ENCODE measurements at regions of chr19 and their contacts with region 1.

Region 1: GRCh38 chr19:54189735-54190502 is 539 bp upstream of the MBOAT7 start:
- DNase-seq: peak; percentile 98 to 100 (median 100)
- ATAC-seq: peak; percentile 73
- H3K4me3 ChIP-seq: peak overlapping the region; percentile 81
- H3K4me3 Mint-ChIP-seq: peak overlapping the region; percentile 90 to 100 (median 93)
- H3K27ac ChIP-seq: peak overlapping the region; percentile 99
- H3K27ac Mint-ChIP-seq: peak overlapping the region; percentile 97 to 100 (median 99)
- H3K4me1 ChIP-seq: peaks cover 20 to 22% of the 10 kb centered on the region in 2 donors
- H3K4me1 Mint-ChIP-seq: peaks cover 15 to 47% (median 39%) of the 10 kb centered on the region in 7 donors
- H3K27me3 ChIP-seq: no peaks in the 10 kb centered on the region
- H3K27me3 Mint-ChIP-seq: peaks cover 0 to 2% (median 0%) of the 10 kb centered on the region in 5 donors

Region 2: DNA sequence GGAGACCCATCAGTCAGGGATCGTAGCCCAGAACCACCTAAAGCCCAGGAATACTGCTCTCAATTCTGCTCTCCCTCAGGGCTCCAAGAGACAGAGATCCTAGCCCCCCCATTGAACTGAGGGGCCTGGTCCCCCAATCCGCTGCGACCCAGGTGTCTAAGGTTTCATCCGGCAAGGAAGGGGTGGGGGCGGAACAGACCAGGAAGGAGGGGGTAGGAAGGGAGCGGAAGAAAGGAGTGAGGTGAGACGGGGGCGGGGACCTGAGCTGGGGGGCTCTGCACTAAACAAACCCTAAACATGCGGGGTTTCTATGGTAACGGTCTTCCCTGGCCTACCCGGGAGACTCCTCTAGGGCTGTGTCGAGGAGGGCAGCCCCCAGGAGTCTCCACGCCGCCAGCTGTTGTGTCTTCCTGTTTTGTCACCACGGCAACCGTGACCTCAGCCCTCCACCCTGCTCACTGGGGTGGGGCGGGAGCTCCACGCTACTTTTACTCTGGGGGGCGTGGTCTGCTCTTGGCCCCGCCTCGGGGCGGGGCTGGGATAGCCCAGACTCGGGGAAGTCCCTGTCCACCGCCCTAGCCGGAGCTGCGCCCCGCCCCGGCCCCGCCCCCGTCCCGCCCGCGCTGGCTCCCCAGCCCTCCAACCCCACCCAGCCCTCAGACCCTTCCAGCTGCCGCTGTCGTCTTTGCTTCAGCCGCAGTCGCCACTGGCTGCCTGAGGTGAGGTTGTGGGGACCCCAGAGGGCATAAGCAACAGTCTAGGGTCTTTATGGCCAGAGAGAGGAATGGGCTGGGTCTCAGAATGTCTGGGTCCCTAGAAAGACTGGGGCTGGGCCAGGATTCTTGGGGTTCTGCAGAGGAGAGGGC is 322.5 kb before region 1 on chr19 and contains the start of gene MYADM:
- CTCF ChIA-PET with region 1: no interaction called
- POLR2A ChIA-PET with region 1: interaction called, 8 read pairs
- intact Hi-C with region 1: loop called (anchors 1 kb)
- DNase-seq: peak; percentile 99 to 100 (median 100)
- ATAC-seq: peak; percentile 80
- H3K4me3 ChIP-seq: peak within 1 kb of the TSS; percentile 90
- H3K4me3 Mint-ChIP-seq: peak within 1 kb of the TSS; percentile 92 to 100 (median 97)
- H3K27ac ChIP-seq: peak within 1 kb of the TSS; percentile 99
- H3K27ac Mint-ChIP-seq: peak within 1 kb of the TSS; percentile 97 to 100 (median 99)
- H3K4me1 ChIP-seq: peaks cover 17 to 26% of the 10 kb centered on the region in 2 donors
- H3K4me1 Mint-ChIP-seq: peaks cover 15 to 45% (median 34%) of the 10 kb centered on the region in 7 donors
- H3K27me3 ChIP-seq: no peaks in the 10 kb centered on the region
- H3K27me3 Mint-ChIP-seq: peaks cover 0 to 5% (median 0%) of the 10 kb centered on the region in 5 donors
- total RNA-seq, gene MYADM: 51.5 to 524 (median 116) TPM

Region 3: GRCh38 chr19:53977429-53977990 is 212.4 kb before region 1 on chr19:
- CTCF ChIA-PET with region 1: no interaction called
- POLR2A ChIA-PET with region 1: no interaction called
- intact Hi-C with region 1: no loop called
- DNase-seq: peak; percentile 34 to 69 (median 59)
- ATAC-seq: peak; percentile 83
- H3K4me3 ChIP-seq: peak overlapping the region; percentile 42
- H3K4me3 Mint-ChIP-seq: peak overlapping the region; percentile 73 to 90 (median 83)
- H3K27ac ChIP-seq: no peak overlapping the region
- H3K27ac Mint-ChIP-seq: peak overlapping the region in 2 of 9 donors; percentile 21 to 50
- H3K4me1 ChIP-seq: peaks cover 0 to 5% of the 10 kb centered on the region in 2 donors
- H3K4me1 Mint-ChIP-seq: peaks cover 14 to 41% (median 30%) of the 10 kb centered on the region in 7 donors
- H3K27me3 ChIP-seq: peaks cover 6 to 16% of the 10 kb centered on the region in 2 donors
- H3K27me3 Mint-ChIP-seq: peaks cover 48 to 70% (median 61%) of the 10 kb centered on the region in 5 donors

Region 4: GRCh38 chr19:54137086-54137921 is 52.6 kb before region 1 on chr19 and contains the start of gene CNOT3:
- CTCF ChIA-PET with region 1: interaction called, 6 read pairs
- POLR2A ChIA-PET with region 1: interaction called, 48 read pairs
- intact Hi-C with region 1: loop called (anchors 1 kb)
- DNase-seq: peak; percentile 90 to 100 (median 100)
- ATAC-seq: peak; percentile 88
- H3K4me3 ChIP-seq: peak within 1 kb of the TSS; percentile 66
- H3K4me3 Mint-ChIP-seq: peak within 1 kb of the TSS; percentile 87 to 98 (median 90)
- H3K27ac ChIP-seq: peak within 1 kb of the TSS; percentile 97
- H3K27ac Mint-ChIP-seq: peak within 1 kb of the TSS; percentile 85 to 94 (median 92)
- H3K4me1 ChIP-seq: peaks cover 19 to 30% of the 10 kb centered on the region in 2 donors
- H3K4me1 Mint-ChIP-seq: peaks cover 33 to 60% (median 46%) of the 10 kb centered on the region in 7 donors
- H3K27me3 ChIP-seq: no peaks in the 10 kb centered on the region
- H3K27me3 Mint-ChIP-seq: no peaks in the 10 kb centered on the region
- total RNA-seq, gene CNOT3: 38.0 to 84.6 (median 63.9) TPM

Region 5: GRCh38 chr19:54178581-54179243 is 11.2 kb before region 1 on chr19:
- CTCF ChIA-PET with region 1: no interaction called
- POLR2A ChIA-PET with region 1: interaction called, 6 read pairs
- intact Hi-C with region 1: loop called (anchors 1 kb)
- DNase-seq: peak in 5 of 9 donors; percentile 34 to 48 (median 46)
- ATAC-seq: peak; percentile 93
- H3K4me3 ChIP-seq: no peak overlapping the region
- H3K4me3 Mint-ChIP-seq: no peak overlapping the region
- H3K27ac ChIP-seq: no peak overlapping the region
- H3K27ac Mint-ChIP-seq: peak overlapping the region in 1 of 9 donors; percentile 49
- H3K4me1 ChIP-seq: no peaks in the 10 kb centered on the region
- H3K4me1 Mint-ChIP-seq: peaks cover 0 to 7% (median 0%) of the 10 kb centered on the region in 7 donors
- H3K27me3 ChIP-seq: no peaks in the 10 kb centered on the region
- H3K27me3 Mint-ChIP-seq: no peaks in the 10 kb centered on the region

Region 6: DNA sequence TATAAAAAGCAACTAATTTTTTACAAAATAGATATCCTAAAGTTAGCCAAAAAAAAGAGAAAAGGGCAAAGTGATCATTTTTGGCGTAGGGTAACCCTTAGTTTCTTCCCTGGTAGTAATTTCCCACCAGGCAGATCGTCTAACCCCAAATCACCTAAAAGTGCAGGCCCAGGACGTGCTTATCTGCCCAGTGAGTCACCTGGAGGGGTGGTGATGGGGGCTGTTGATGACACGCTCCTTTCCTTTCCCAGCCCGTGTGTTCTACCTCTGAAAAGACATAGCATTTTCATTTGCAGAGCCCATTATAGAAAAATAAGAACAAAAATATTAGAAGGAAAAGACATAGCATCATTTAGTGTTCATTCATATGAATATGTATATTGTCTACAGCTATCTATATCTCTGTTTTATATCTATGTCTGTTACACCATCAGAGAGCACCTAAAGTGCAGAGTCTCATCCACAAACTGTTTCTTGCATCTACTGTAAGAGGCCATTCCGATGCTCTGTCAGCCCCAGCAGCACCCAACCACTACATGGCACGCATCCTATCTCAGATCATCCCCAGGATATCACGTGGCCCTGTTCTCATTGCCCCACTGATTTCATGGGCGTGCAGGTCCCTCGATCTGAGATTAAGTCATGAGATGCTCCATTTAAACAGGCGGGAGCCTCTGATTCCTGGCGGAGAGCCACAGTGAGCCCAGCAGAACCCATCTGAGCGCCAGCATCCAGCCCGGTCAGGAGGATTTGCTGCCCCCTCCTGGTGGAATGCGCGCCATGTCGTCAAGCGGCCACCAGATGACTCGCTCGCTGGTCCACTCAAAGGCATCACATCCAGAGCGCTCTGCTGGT is 41.4 kb after region 1 on chr19:
- CTCF ChIA-PET with region 1: no interaction called
- POLR2A ChIA-PET with region 1: no interaction called
- intact Hi-C with region 1: loop called in 1 of 2 experiments (anchors 1 kb)
- DNase-seq: peak; percentile 48 to 89 (median 70)
- ATAC-seq: peak; percentile 85
- H3K4me3 ChIP-seq: no peak overlapping the region
- H3K4me3 Mint-ChIP-seq: no peak overlapping the region
- H3K27ac ChIP-seq: no peak overlapping the region
- H3K27ac Mint-ChIP-seq: peak overlapping the region in 1 of 9 donors; percentile 26
- H3K4me1 ChIP-seq: peaks cover 0 to 3% of the 10 kb centered on the region in 2 donors
- H3K4me1 Mint-ChIP-seq: peaks cover 0 to 14% (median 5%) of the 10 kb centered on the region in 7 donors
- H3K27me3 ChIP-seq: no peaks in the 10 kb centered on the region
- H3K27me3 Mint-ChIP-seq: peaks cover 0 to 52% (median 35%) of the 10 kb centered on the region in 5 donors

Region 7: GRCh38 chr19:55339048-55339888 is 1149.3 kb after region 1 on chr19 and contains the start of gene KMT5C:
- CTCF ChIA-PET with region 1: no interaction called
- POLR2A ChIA-PET with region 1: no interaction called
- intact Hi-C with region 1: loop called in 1 of 2 experiments (anchors 1 kb)
- DNase-seq: peak; percentile 99 to 100 (median 100)
- ATAC-seq: peak; percentile 83
- H3K4me3 ChIP-seq: peak within 1 kb of the TSS; percentile 80
- H3K4me3 Mint-ChIP-seq: peak within 1 kb of the TSS; percentile 87 to 99 (median 96)
- H3K27ac ChIP-seq: peak within 1 kb of the TSS; percentile 93
- H3K27ac Mint-ChIP-seq: peak within 1 kb of the TSS; percentile 88 to 100 (median 97)
- H3K4me1 ChIP-seq: peaks cover 8 to 15% of the 10 kb centered on the region in 2 donors
- H3K4me1 Mint-ChIP-seq: peaks cover 5 to 28% (median 24%) of the 10 kb centered on the region in 7 donors
- H3K27me3 ChIP-seq: no peaks in the 10 kb centered on the region
- H3K27me3 Mint-ChIP-seq: peaks cover 0 to 16% (median 0%) of the 10 kb centered on the region in 5 donors
- total RNA-seq, gene KMT5C: 21.8 to 63.3 (median 27.2) TPM

Region 8: DNA sequence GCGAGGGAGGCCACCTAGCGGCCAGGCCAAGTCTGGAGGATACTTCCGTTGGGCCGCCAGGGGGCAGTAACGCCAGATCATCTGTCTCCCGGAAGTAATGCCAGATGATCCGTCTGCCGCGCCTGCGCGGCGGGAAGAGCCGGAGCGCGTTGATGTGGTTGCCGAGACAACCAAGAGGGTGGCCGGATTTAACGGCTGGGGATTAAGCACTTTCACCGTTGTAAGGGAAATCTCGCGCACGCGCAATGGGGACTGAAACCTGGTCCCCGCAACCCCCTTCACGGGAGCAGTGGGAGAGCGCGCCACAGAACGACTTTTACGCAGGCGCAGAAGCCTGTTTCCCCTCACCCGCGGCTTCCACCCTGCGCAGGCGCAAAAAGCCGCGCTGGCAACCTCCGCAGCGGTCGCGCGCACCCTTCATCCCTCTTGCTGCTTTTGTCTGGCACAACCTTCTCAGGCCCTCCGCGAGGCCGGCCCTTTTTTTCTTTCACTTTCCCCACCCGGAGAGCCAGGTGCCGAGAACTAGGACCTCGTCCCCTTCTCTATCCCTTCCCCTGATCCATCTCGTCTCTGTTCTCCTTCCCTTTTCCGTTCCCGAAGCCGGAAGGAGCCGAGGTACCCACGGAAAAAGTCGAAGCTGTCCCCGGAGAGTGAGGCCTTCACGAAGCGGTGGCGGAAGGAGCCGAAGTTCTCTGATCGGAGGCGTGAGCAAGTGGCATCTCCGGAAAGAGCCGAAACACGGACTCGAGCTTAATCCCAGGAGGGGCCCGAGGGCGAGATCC is 1464.0 kb after region 1 on chr19:
- CTCF ChIA-PET with region 1: no interaction called
- POLR2A ChIA-PET with region 1: interaction called, 3 read pairs
- intact Hi-C with region 1: loop called in 1 of 2 experiments (anchors 1 kb)
- DNase-seq: peak; percentile 95 to 100 (median 100)
- ATAC-seq: peak; percentile 83
- H3K4me3 ChIP-seq: peak overlapping the region; percentile 98
- H3K4me3 Mint-ChIP-seq: peak overlapping the region; percentile 83 to 99 (median 96)
- H3K27ac ChIP-seq: peak overlapping the region; percentile 99
- H3K27ac Mint-ChIP-seq: peak overlapping the region; percentile 95 to 100 (median 99)
- H3K4me1 ChIP-seq: peaks cover 30 to 36% of the 10 kb centered on the region in 2 donors
- H3K4me1 Mint-ChIP-seq: peaks cover 29 to 55% (median 39%) of the 10 kb centered on the region in 7 donors
- H3K27me3 ChIP-seq: no peaks in the 10 kb centered on the region
- H3K27me3 Mint-ChIP-seq: peaks cover 0 to 2% (median 0%) of the 10 kb centered on the region in 5 donors